ENCODE measurements at regions of chr18 and their contacts with region 1.

Region 1: GRCh38 chr18:68660354-68661183 is 54.3 kb downstream of the TMX3 start:
- DNase-seq: no peak
- ATAC-seq: no peak
- H3K4me3 Mint-ChIP-seq: no peak overlapping the region
- H3K27ac Mint-ChIP-seq: no peak overlapping the region
- H3K4me1 Mint-ChIP-seq: no peaks in the 10 kb centered on the region
- H3K27me3 Mint-ChIP-seq: no peaks in the 10 kb centered on the region

Region 2: GRCh38 chr18:68676913-68677312 is 16.3 kb after region 1 on chr18:
- CTCF ChIA-PET with region 1: interaction called, 12 read pairs
- POLR2A ChIA-PET with region 1: no interaction called
- intact Hi-C with region 1: no loop called
- DNase-seq: no peak
- ATAC-seq: peak; percentile 60
- H3K4me3 Mint-ChIP-seq: no peak overlapping the region
- H3K27ac Mint-ChIP-seq: peak overlapping the region; percentile 4
- H3K4me1 Mint-ChIP-seq: no peaks in the 10 kb centered on the region
- H3K27me3 Mint-ChIP-seq: no peaks in the 10 kb centered on the region

Region 3: DNA sequence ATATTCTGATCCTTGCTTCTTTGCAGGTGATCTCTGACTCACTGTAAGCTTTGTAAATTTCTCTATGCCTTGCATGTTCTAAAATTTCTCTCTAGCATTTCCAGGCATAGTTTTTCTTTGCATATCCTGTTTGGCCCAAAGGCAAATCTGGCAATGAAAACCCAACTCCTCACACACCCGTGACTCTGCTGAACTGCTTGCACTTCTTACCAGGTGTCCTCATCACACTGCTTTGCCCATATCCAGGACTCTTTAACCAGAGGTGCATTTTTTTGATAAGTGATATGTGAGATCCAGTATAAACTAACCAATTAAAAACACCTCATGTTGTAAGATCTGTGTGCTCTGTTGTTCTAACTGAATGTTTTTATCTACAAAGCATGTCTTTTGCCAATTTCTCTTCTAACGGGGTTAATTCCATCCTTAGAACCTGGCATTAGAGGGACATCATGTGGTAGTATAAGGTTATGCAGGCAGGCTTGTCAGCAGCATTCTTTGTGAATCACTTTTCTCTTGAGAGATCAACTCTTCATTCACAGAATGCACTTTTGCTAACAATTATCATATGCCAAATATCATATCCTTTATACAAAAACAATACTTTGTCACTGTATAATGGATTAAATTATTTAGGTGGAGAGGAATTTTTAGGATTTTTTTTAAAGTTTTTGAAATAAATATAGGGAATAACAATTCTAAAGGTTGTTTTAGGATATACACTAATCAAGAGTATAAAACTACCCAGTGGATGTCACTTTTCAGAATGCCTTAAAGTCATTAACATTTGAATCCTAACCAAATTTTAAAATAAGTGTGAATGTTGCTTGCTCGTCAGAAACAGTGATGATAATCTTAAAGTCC is 75.1 kb after region 1 on chr18:
- CTCF ChIA-PET with region 1: interaction called, 5 read pairs
- POLR2A ChIA-PET with region 1: no interaction called
- intact Hi-C with region 1: loop called in 1 of 2 experiments (anchors 5 kb)
- DNase-seq: peak; percentile 24
- ATAC-seq: peak; percentile 77
- H3K4me3 Mint-ChIP-seq: no peak overlapping the region
- H3K27ac Mint-ChIP-seq: no peak overlapping the region
- H3K4me1 Mint-ChIP-seq: no peaks in the 10 kb centered on the region
- H3K27me3 Mint-ChIP-seq: no peaks in the 10 kb centered on the region

Region 4: GRCh38 chr18:69291044-69291443 is 630.5 kb after region 1 on chr18:
- CTCF ChIA-PET with region 1: no interaction called
- POLR2A ChIA-PET with region 1: no interaction called
- intact Hi-C with region 1: no loop called
- DNase-seq: no peak
- ATAC-seq: no peak
- H3K4me3 Mint-ChIP-seq: no peak overlapping the region
- H3K27ac Mint-ChIP-seq: no peak overlapping the region
- H3K4me1 Mint-ChIP-seq: no peaks in the 10 kb centered on the region
- H3K27me3 Mint-ChIP-seq: peaks cover 2% of the 10 kb centered on the region

Measured in activated CD4-positive, alpha-beta T cell treated with anti-CD3 and anti-CD28 coated beads for 36 hours (primary cell).